ENCODE measurements at regions of chr5 and their contacts with region 1.

Region 1: DNA sequence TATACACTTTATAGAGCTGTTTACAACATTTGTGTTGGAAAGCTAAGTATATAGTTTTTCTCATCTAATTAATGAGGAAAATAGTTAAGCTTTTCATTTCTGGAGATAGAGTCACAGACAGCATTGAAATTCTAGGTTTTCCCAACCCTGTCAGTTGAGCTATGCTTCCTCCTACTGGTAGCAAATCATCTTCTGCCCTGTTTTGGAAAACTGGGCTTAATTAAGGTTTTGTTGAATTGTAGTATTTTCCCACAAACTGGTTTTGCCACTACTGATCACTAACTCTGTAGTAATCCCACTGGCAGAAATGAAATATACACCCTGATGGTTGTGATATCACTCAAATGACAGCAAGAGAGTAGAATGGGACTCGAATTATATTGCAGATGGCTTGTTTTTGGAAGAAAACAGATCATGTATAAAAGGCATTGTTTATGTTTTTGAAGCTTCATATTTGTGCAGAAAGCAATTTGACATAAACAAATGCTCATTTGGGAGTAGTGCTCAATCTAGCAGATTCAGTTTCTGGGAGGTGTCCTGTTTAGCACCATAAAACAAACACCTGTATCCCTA is 46.6 kb downstream of the CD180 start:
- DNase-seq: no peak
- ATAC-seq: no peak

Region 2: GRCh38 chr5:66814146-66814991 is 335.7 kb before region 1 on chr5:
- intact Hi-C with region 1: loop called (anchors 5 kb)
- DNase-seq: no peak
- ATAC-seq: no peak

Region 3: DNA sequence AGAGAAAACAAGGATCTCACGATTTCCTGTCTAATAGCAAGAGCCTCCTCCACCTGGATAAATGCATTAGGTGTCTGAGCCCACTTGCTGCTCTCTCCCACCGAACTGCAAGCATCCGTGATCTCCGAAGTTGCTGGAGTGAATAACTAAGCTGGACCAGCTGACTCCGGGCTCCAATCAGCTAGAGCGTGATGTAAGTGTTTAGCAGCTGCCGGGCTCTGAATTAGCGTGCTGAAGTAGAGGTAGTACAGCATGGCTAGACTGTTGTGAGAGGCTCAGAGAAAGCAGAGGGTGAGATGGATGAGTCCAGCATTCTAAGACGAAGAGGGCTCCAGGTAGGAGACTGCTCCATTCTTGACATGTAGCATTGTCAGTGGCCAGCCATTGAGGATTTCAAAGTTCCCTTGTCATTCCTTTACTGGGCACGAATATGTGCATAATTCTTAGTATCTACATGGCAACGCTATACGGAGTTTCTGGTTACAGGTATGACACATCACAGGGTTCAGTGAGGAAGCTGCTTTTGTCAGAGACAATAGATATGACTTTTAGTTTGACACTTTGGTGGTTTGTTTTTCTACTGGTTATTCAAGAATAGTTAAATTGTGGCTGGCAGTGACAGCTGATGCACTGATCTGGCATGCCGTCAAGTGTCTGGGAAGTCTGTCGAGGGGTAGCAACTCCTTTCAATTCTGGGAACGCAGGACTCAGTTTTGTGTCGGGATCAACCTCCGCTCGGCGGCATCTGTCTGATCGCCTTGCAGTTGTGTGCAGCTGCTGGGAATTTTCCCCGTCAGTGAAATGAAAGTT is 321.3 kb before region 1 on chr5:
- intact Hi-C with region 1: loop called (anchors 5 kb)
- DNase-seq: peak; percentile 79
- ATAC-seq: peak; percentile 94

Region 4: GRCh38 chr5:66987949-66988838 is 161.8 kb before region 1 on chr5:
- intact Hi-C with region 1: loop called (anchors 5 kb)
- DNase-seq: no peak
- ATAC-seq: peak; percentile 33